Activated CD8-positive, alpha-beta T cell treated with anti-CD3 and anti-CD28 coated beads, Interleukin-2, amount 10 ng/mL, durations not matched to agents 7 days and 5 days (primary cell): ENCODE measurements at regions of chr5 and their contacts with region 1.

Region 1: GRCh38 chr5:119411935-119412602 is 40.2 kb upstream of the HSD17B4 start:
- DNase-seq: peak; percentile 73
- ATAC-seq: peak; percentile 87
- H3K4me3 Mint-ChIP-seq: peak overlapping the region; percentile 72
- H3K27ac Mint-ChIP-seq: peak overlapping the region; percentile 0
- H3K4me1 Mint-ChIP-seq: peaks cover 24% of the 10 kb centered on the region
- H3K27me3 Mint-ChIP-seq: no peaks in the 10 kb centered on the region

Region 2: DNA sequence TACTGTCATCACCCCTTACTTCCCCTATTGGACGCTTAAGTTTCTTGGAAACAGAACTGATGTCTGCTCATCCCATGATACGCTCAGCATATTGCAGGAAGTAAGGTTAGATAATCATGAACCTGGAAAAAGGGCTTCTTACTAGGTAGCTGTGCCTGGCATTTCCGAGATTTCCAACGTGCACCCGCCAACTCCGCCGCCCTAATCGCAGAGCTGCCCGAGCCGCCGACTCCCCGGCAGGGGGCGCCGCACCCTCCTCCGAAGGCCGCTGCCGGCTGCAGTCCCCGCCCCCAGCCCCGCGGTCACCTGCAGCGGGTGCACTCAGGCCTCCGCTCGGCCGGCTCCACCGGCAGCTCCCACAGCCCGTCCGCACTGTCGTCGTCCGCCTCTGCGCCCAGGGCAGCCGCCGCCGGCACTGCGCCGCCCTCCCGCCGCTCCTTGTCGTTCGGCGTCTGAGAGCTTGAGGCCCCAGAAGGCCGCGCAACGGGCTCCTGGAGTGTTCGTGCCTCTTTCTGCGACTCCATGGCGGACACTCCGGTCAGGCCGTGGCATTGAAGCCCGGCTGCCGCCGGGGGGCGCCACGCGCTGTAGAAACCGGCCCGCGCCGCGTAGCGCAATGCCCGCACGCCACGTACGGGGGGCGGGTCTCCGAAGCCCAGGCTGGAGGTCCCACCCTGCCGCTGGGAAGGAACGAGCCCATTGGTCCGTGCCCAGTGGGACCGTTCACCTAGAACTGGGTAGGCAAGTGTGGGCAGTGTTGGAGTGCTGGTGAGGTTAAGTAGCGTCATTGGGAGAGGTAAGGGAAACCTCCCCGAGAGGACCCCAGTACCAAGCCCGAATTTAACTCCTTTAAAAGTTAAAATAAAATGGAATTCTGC is 423.8 kb before region 1 on chr5 and contains the start of gene DTWD2:
- CTCF ChIA-PET with region 1: interaction called, 129 read pairs
- POLR2A ChIA-PET with region 1: interaction called, 7 read pairs
- DNase-seq: peak; percentile 93
- ATAC-seq: peak; percentile 96
- H3K4me3 Mint-ChIP-seq: peak within 1 kb of the TSS; percentile 77
- H3K27ac Mint-ChIP-seq: peak within 1 kb of the TSS; percentile 67
- H3K4me1 Mint-ChIP-seq: peaks cover 13% of the 10 kb centered on the region
- H3K27me3 Mint-ChIP-seq: no peaks in the 10 kb centered on the region
- total RNA-seq, gene DTWD2: 2.6 to 3.3 TPM

Region 3: GRCh38 chr5:119070828-119071572 is 341.1 kb before region 1 on chr5 and contains the start of gene DMXL1:
- CTCF ChIA-PET with region 1: interaction called, 13 read pairs
- POLR2A ChIA-PET with region 1: no interaction called
- DNase-seq: peak; percentile 99
- ATAC-seq: peak; percentile 91
- H3K4me3 Mint-ChIP-seq: peak within 1 kb of the TSS; percentile 95
- H3K27ac Mint-ChIP-seq: peak within 1 kb of the TSS; percentile 96
- H3K4me1 Mint-ChIP-seq: peaks cover 36% of the 10 kb centered on the region
- H3K27me3 Mint-ChIP-seq: no peaks in the 10 kb centered on the region
- total RNA-seq, gene DMXL1: 32.3 to 33.9 TPM

Region 4: GRCh38 chr5:119290161-119290569 is 121.9 kb before region 1 on chr5:
- CTCF ChIA-PET with region 1: interaction called, 16 read pairs
- POLR2A ChIA-PET with region 1: no interaction called
- DNase-seq: no peak
- ATAC-seq: peak; percentile 34
- H3K4me3 Mint-ChIP-seq: peak overlapping the region; percentile 48
- H3K27ac Mint-ChIP-seq: peak overlapping the region; percentile 94
- H3K4me1 Mint-ChIP-seq: peaks cover 90% of the 10 kb centered on the region
- H3K27me3 Mint-ChIP-seq: no peaks in the 10 kb centered on the region

Region 5: DNA sequence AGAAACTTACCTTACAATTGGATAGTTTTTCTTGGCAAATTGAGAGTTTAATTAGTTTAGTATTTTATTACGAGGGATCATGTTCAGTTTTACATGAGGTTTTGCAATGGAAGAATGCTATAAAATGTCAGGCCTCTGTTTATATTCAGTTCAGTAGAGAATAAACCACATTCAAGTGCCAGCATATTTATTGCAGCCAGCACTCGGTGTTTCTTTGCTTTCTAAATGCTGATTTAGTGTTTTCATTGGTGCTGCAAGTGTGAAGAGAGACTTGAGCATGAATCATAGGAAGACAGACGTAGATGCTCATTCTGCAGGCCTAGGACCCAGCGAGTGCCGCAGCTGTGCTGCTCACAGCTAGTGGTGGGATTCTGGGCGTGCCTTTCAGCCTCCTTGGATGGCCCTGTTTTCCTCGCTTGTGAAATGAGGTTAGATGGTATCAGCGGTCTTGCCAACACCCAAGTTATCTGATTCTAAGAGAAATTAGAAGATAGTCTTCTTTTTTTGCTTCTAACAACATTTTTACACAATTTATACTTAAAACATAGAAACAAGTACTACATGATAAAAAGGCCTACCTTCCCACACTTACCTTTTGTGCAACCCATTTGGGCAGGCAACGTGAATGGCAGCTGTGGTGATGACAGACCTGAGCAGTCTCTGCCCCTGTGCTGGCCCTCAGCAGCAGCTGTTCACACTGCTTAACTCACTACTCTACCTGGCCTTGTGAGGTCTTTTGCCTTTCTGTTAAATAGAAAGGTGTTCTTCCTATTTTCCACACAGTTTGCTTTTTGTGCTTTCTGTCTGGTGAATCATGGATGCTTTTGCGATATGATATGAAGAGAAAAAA is 83.1 kb before region 1 on chr5:
- CTCF ChIA-PET with region 1: interaction called, 16 read pairs
- POLR2A ChIA-PET with region 1: no interaction called
- DNase-seq: peak; percentile 72
- ATAC-seq: peak; percentile 62
- H3K4me3 Mint-ChIP-seq: peak overlapping the region; percentile 45
- H3K27ac Mint-ChIP-seq: peak overlapping the region; percentile 95
- H3K4me1 Mint-ChIP-seq: peaks cover 82% of the 10 kb centered on the region
- H3K27me3 Mint-ChIP-seq: no peaks in the 10 kb centered on the region

Region 6: GRCh38 chr5:119355685-119356611 is 56.1 kb before region 1 on chr5 and contains the start of gene TNFAIP8:
- CTCF ChIA-PET with region 1: interaction called, 21 read pairs
- POLR2A ChIA-PET with region 1: no interaction called
- DNase-seq: peak; percentile 53
- ATAC-seq: peak; percentile 69
- H3K4me3 Mint-ChIP-seq: peak within 1 kb of the TSS; percentile 83
- H3K27ac Mint-ChIP-seq: peak within 1 kb of the TSS; percentile 88
- H3K4me1 Mint-ChIP-seq: peaks cover 88% of the 10 kb centered on the region
- H3K27me3 Mint-ChIP-seq: no peaks in the 10 kb centered on the region
- total RNA-seq, gene TNFAIP8: 123 to 127 TPM

Region 7: DNA sequence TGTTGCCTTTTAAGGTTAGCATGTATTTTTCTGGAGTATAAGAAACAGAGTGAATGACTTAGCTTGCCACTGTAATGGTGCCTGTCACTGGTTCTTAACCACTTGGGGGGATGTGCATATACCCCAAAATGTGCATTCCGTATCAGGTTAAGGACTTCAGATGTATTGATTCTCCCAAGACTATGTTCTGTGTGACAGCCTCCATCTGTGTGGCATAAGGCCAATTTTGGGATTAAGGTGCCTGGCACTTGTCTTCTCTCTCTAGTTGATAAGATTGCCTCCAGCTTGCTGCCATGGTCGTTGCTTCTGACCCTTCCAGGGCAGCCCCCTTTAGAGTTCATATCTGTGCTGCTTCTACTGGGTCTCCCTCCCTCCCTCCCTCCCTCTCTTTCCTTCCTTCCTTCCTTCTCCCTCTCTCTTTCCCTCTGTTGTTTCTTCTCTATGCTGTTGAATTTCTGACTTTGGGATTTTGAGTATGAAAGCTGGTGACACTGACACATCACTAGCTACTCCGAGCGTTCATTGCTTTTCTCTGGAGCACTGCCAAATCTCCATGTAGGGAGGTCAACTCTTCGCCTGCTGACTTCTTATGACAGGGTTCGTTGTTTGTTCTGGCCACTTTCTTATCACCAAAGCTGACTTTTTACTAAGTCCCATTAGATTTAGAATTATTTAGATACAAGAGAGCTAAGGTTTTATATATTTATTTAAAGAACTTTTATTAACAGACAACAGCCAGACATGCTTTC is 25.3 kb before region 1 on chr5:
- CTCF ChIA-PET with region 1: interaction called, 12 read pairs
- POLR2A ChIA-PET with region 1: no interaction called
- DNase-seq: no peak
- ATAC-seq: no peak
- H3K4me3 Mint-ChIP-seq: no peak overlapping the region
- H3K27ac Mint-ChIP-seq: no peak overlapping the region
- H3K4me1 Mint-ChIP-seq: peaks cover 71% of the 10 kb centered on the region
- H3K27me3 Mint-ChIP-seq: no peaks in the 10 kb centered on the region